Colonic mucosa (tissue), 4 donors: ENCODE measurements at regions of chr13 and their contacts with region 1.

Region 1: DNA sequence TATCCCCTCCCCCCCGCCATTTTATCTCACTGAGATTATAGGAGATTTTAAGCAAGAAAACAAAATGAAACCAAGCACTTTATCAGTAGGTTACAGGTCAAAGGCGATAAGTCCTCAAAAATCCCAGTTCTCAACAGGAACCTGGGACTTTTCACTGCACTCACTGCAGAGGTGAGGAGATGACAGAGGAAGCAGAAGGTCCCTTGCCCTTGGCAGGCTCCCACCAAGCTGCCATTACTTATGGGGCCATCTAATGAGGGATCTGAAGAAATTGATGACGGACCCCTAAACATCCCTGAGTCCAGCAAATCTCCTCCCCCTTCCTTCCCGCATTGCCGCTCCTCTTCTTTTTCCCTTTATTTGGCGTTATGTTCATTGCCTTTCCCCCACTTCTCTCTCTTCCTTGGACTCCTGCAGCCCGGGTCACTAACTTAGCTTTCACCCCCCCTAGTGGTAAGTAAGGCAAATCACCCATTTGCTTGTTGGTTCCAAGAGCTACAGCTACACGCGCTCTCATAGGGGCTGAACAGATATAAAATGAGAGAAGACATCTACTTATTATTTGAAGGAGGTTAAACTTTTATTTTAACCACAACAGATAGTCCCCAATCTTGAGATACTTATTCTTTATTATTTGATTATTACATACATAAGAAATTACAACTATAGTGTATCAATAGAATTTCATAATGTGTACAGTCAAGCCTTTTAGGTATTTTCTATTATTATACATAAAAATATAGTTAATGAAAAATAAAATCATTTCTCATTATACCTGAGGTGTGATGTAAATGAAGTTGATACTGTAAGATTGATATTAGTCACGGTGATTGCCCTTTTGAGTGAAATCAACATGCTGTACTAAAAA is 52.0 kb upstream of the ARGLU1 start:
- DNase-seq: peak; percentile 46
- H3K4me3 ChIP-seq: no peak overlapping the region
- H3K27ac ChIP-seq: no peak overlapping the region
- H3K4me1 ChIP-seq: no peaks in the 10 kb centered on the region
- H3K27me3 ChIP-seq: peaks cover 6% of the 10 kb centered on the region
- CTCF ChIP-seq: peak; percentile 58

Region 2: GRCh38 chr13:104773775-104774174 is 1846.1 kb before region 1 on chr13:
- intact Hi-C with region 1: loop called (anchors 10 kb)
- DNase-seq: no peak
- H3K4me3 ChIP-seq: no peak overlapping the region
- H3K27ac ChIP-seq: no peak overlapping the region
- H3K4me1 ChIP-seq: no peaks in the 10 kb centered on the region
- H3K27me3 ChIP-seq: no peaks in the 10 kb centered on the region
- CTCF ChIP-seq: peak; percentile 35

Region 3: GRCh38 chr13:106555631-106556328 is 64.1 kb before region 1 on chr13:
- intact Hi-C with region 1: no loop called
- DNase-seq: no peak
- H3K4me3 ChIP-seq: no peak overlapping the region
- H3K27ac ChIP-seq: no peak overlapping the region
- H3K4me1 ChIP-seq: no peaks in the 10 kb centered on the region
- H3K27me3 ChIP-seq: no peaks in the 10 kb centered on the region
- CTCF ChIP-seq: no peak

Region 4: GRCh38 chr13:106567474-106568298 is 52.2 kb before region 1 on chr13 and contains the start of gene ARGLU1:
- intact Hi-C with region 1: loop called (anchors 5 kb)
- DNase-seq: peak; percentile 95
- H3K4me3 ChIP-seq: peak within 1 kb of the TSS; percentile 81
- H3K27ac ChIP-seq: peak within 1 kb of the TSS; percentile 99
- H3K4me1 ChIP-seq: peaks cover 9% of the 10 kb centered on the region
- H3K27me3 ChIP-seq: no peaks in the 10 kb centered on the region
- CTCF ChIP-seq: no peak
- total RNA-seq, gene ARGLU1: 58.7 to 60.0 TPM

Region 5: GRCh38 chr13:106786006-106786563 is 166.2 kb after region 1 on chr13:
- intact Hi-C with region 1: no loop called
- DNase-seq: no peak
- H3K4me3 ChIP-seq: no peak overlapping the region
- H3K27ac ChIP-seq: no peak overlapping the region
- H3K4me1 ChIP-seq: no peaks in the 10 kb centered on the region
- H3K27me3 ChIP-seq: no peaks in the 10 kb centered on the region
- CTCF ChIP-seq: no peak

Region 6: GRCh38 chr13:106917673-106918556 is 298.0 kb after region 1 on chr13:
- intact Hi-C with region 1: loop called (anchors 10 kb)
- DNase-seq: peak; percentile 78
- H3K4me3 ChIP-seq: peak overlapping the region; percentile 56
- H3K27ac ChIP-seq: peak overlapping the region; percentile 8
- H3K4me1 ChIP-seq: no peaks in the 10 kb centered on the region
- H3K27me3 ChIP-seq: no peaks in the 10 kb centered on the region
- CTCF ChIP-seq: peak; percentile 97

Region 7: DNA sequence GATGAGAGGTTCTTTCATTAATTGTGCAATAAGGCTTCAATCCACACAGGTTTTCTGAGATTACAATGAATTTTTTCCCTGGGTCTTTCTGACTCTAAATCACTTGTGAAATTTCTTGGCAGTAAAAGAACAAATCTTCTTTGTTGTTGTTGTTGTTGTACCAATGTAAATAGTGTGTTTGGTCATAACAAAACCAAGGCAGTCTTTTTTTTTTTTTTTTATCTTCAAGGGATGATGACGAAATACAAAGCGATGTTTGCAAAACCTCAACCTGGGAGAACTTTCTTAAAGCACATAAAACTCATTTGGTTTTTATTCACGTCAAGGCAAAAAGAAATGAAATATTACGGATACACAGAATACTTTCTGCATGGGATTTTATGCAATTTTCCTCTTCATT is 1133.4 kb after region 1 on chr13:
- intact Hi-C with region 1: no loop called
- DNase-seq: no peak
- H3K4me3 ChIP-seq: no peak overlapping the region
- H3K27ac ChIP-seq: no peak overlapping the region
- H3K4me1 ChIP-seq: no peaks in the 10 kb centered on the region
- H3K27me3 ChIP-seq: no peaks in the 10 kb centered on the region
- CTCF ChIP-seq: no peak